Mammary epithelial cell (primary cell): ENCODE measurements at regions of chr5 and their contacts with region 1.

Region 1: DNA sequence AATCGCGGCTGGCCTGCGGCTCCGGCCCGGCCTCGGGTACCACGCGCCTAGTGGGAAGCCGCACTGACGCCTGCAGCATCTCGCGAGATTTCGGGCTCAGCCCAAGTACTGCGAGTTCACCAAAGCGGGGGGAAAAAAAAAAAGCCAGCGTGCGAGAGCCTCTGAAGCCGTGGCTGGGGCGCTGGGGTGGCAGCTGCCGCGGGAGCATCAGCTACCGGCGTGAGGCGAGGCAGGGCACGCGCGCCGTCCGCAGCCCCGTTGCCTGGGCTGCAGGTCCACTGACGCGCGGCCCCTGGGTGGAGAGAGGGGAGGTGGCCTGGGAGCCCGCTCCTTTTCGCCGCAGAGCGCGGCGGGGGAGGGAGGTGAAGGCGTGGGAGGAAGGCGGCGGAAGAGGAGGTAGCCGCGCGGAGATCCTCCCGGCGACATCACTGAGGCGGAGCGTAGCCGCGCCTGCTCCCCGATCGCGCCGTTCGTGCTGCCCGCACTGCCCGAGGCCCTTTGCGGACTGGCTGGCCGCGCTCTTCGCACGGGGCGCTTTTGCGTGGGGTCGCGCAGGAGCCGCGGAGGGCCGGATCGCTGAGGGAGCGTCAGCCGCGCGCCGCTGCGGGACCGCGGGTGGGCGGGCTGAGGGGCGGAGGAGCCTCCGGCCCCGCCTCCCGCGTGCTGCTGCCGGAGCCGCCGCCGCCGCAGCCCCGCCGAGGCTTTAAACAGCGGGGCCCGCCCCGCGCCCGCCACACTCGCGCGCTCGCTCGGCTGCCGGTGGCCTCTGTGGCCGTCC is at the start of gene SLC12A2:
- DNase-seq: peak; percentile 94
- H3K4me3 ChIP-seq: peak within 1 kb of the TSS; percentile 69 to 93 (median 88)
- H3K27ac ChIP-seq: peak within 1 kb of the TSS; percentile 89
- H3K4me1 ChIP-seq: peaks cover 13% of the 10 kb centered on the region
- H3K27me3 ChIP-seq: no peaks in the 10 kb centered on the region
- CTCF ChIP-seq: no peak
- total RNA-seq, gene SLC12A2: 24.1 to 50.3 TPM

Region 2: GRCh38 chr5:127757576-127757975 is 325.6 kb before region 1 on chr5:
- CTCF ChIA-PET with region 1: interaction called, 3 read pairs
- dilution Hi-C with region 1: no loop called
- in situ Hi-C with region 1: loop called in 1 of 2 experiments (anchors 25 kb)
- intact Hi-C with region 1: loop called (anchors 1 kb)
- DNase-seq: peak; percentile 53
- H3K4me3 ChIP-seq: no peak overlapping the region
- H3K27ac ChIP-seq: no peak overlapping the region
- H3K4me1 ChIP-seq: no peaks in the 10 kb centered on the region
- H3K27me3 ChIP-seq: peaks cover 2% of the 10 kb centered on the region
- CTCF ChIP-seq: peak; percentile 43 to 73

Region 3: DNA sequence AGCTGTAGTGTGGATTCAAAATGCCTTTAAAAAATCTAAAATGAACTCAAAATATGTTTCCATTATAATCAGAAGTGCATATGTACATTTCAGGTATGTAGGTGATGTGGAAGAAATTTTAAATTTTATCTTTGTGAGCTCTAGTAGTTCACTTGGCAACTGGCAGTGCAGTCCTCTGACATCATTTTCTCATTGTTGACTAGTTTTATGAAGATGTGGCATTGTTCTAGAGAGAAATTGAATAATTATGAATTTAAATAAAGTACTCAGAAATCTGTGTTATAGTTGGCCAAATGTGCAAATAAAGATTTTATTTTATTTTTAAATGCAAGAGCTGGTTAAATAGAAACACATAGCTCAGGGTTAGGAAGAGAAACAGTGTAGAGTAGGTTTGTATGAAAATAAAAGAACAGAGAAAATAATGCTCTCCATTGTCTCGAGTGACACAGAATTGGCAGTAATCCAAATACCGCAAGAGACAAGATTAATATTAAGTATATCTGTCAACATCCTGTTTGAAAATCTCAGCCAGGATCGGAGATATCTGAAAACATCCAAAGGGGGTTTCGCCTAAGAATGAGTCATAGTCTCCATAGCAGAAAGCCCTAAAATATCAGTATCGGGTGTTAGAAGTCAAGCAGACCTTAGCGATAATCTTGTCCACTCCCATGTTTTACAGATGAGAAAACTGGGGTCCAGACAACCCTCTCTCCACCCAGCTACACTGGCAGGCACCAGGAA is 190.6 kb before region 1 on chr5:
- CTCF ChIA-PET with region 1: no interaction called
- dilution Hi-C with region 1: no loop called
- in situ Hi-C with region 1: no loop called
- intact Hi-C with region 1: loop called (anchors 5 kb)
- DNase-seq: peak; percentile 89
- H3K4me3 ChIP-seq: peak overlapping the region in 1 of 3 experiments; percentile 39
- H3K27ac ChIP-seq: peak overlapping the region; percentile 79
- H3K4me1 ChIP-seq: peaks cover 21% of the 10 kb centered on the region
- H3K27me3 ChIP-seq: no peaks in the 10 kb centered on the region
- CTCF ChIP-seq: no peak

Region 4: GRCh38 chr5:127959152-127959764 is 124.0 kb before region 1 on chr5:
- CTCF ChIA-PET with region 1: no interaction called
- dilution Hi-C with region 1: no loop called
- in situ Hi-C with region 1: no loop called
- intact Hi-C with region 1: loop called (anchors 5 kb)
- DNase-seq: peak; percentile 84
- H3K4me3 ChIP-seq: no peak overlapping the region
- H3K27ac ChIP-seq: no peak overlapping the region
- H3K4me1 ChIP-seq: peaks cover 31% of the 10 kb centered on the region
- H3K27me3 ChIP-seq: no peaks in the 10 kb centered on the region
- CTCF ChIP-seq: no peak

Region 5: GRCh38 chr5:128038643-128039042 is 44.6 kb before region 1 on chr5:
- CTCF ChIA-PET with region 1: no interaction called
- dilution Hi-C with region 1: no loop called
- in situ Hi-C with region 1: no loop called
- intact Hi-C with region 1: loop called (anchors 2 kb)
- DNase-seq: peak; percentile 51
- H3K4me3 ChIP-seq: no peak overlapping the region
- H3K27ac ChIP-seq: peak overlapping the region; percentile 63
- H3K4me1 ChIP-seq: peaks cover 16% of the 10 kb centered on the region
- H3K27me3 ChIP-seq: no peaks in the 10 kb centered on the region
- CTCF ChIP-seq: no peak

Region 6: DNA sequence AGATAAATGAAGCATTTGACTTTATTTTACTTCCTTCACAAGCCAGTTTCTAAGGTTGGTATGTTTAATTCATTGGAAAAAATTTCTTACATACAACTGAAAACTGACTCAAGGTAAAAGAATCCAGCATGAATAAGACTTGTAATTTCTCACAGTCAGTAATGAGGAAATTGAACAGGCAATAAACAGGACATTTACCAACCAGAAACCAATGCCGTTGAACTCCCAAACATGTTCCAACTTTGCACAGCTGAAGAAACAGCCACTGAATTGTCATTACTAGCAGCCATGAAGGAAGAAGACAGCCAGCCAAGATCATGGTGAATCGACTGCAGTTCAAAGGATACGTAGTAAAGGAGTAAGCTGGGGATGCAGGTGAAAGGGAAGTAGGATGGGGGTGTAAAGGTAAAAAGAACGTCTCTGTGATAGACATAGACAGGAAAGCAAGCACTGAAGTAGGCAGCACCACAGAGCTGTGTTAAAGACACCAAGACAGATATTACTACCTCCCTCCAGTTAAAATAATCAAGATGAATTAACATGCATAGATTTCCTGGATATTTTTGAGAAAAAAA is 21.0 kb before region 1 on chr5:
- CTCF ChIA-PET with region 1: no interaction called
- dilution Hi-C with region 1: no loop called
- in situ Hi-C with region 1: no loop called
- intact Hi-C with region 1: no loop called
- DNase-seq: peak; percentile 85
- H3K4me3 ChIP-seq: peak overlapping the region in 1 of 3 experiments; percentile 37
- H3K27ac ChIP-seq: peak overlapping the region; percentile 58
- H3K4me1 ChIP-seq: peaks cover 18% of the 10 kb centered on the region
- H3K27me3 ChIP-seq: no peaks in the 10 kb centered on the region
- CTCF ChIP-seq: no peak

Region 7: GRCh38 chr5:128126241-128126640 is 43.0 kb after region 1 on chr5:
- CTCF ChIA-PET with region 1: no interaction called
- dilution Hi-C with region 1: no loop called
- in situ Hi-C with region 1: no loop called
- intact Hi-C with region 1: no loop called
- DNase-seq: no peak
- H3K4me3 ChIP-seq: no peak overlapping the region
- H3K27ac ChIP-seq: no peak overlapping the region
- H3K4me1 ChIP-seq: peaks cover 6% of the 10 kb centered on the region
- H3K27me3 ChIP-seq: no peaks in the 10 kb centered on the region
- CTCF ChIP-seq: no peak